K562 (cell line): ENCODE measurements at regions of chr16 and their contacts with region 1.

Region 1: DNA sequence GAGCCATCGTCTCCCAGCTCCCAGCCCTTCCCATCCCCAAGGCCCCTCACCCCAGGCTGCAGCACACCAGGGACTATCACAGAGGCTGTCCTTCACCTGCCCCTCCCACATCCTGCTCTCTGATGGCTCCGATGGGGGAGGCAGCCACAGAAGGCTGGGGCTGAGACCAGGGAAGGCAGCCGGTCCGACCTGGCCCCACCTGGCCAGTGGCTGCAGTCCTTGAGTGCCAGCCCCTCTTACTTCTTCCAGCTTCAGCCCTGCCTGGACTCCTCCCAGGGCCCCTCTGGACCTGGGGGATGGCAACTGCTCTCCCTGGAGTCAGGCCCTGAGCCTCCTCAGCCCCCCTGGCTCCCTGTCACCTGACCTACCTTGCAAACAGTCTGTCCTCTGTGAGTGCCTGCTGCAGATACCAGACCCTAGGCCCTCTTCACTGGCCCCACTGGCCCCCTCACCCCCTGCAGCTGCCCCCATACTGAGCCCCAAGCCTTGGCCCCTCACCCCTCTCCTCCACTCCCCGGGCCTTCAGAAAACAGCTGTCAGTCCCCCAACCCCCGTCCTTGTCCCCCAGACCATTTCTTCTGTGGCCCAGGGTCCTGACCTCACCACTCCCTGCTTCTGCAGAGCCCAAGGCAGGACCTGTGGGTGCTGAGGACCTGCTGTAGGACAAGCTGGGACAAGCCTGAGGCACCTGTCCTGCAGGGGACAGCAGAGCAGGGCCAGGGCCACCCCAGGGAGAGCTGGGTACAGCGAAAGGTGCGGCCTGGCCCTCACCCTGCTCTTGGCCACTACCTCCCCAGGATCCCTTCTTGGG is 12.6 kb upstream of the SRRM2 start:
- DNase-seq: no peak
- ATAC-seq: peak; percentile 11
- H3K4me3 ChIP-seq: no peak overlapping the region
- H3K27ac ChIP-seq: no peak overlapping the region
- H3K4me1 ChIP-seq: peaks cover 7 to 43% of the 10 kb centered on the region in 2 experiments; a peak in 4 of 5 replicates
- H3K27me3 ChIP-seq: no peaks in the 10 kb centered on the region
- CTCF ChIP-seq: no peak
- EP300 ChIP-seq: no peak
- POLR2A ChIP-seq: no peak
- RAD21 ChIP-seq: no peak

Region 2: GRCh38 chr16:2682209-2683021 is 57.4 kb before region 1 on chr16 and contains the start of gene KCTD5:
- CTCF ChIA-PET with region 1: no interaction called
- POLR2A ChIA-PET with region 1: no interaction called
- in situ Hi-C with region 1: no loop called
- intact Hi-C with region 1: no loop called
- DNase-seq: peak; percentile 92 to 98 (median 96)
- ATAC-seq: peak; percentile 95
- H3K4me3 ChIP-seq: peak within 1 kb of the TSS; percentile 98
- H3K27ac ChIP-seq: peak within 1 kb of the TSS; percentile 88
- H3K4me1 ChIP-seq: peaks cover 9 to 19% of the 10 kb centered on the region in 2 experiments
- H3K27me3 ChIP-seq: no peaks in the 10 kb centered on the region
- CTCF ChIP-seq: 0 out of 6 replicates have a peak, but pooled peaks of 1 of the 3 experiments have one; percentile 7
- EP300 ChIP-seq: peak; percentile 68
- POLR2A ChIP-seq: peak; percentile 96
- RAD21 ChIP-seq: no peak
- polyA plus RNA-seq, gene KCTD5: 0.73 to 1.6 TPM

Region 3: GRCh38 chr16:2752035-2752849 is 12.4 kb after region 1 on chr16 and contains the start of gene SRRM2:
- CTCF ChIA-PET with region 1: interaction called, 3 read pairs
- POLR2A ChIA-PET with region 1: interaction called, 51 read pairs
- in situ Hi-C with region 1: no loop called
- intact Hi-C with region 1: no loop called
- DNase-seq: peak; percentile 82 to 97 (median 88)
- ATAC-seq: peak; percentile 90
- H3K4me3 ChIP-seq: peak within 1 kb of the TSS; percentile 79
- H3K27ac ChIP-seq: peak within 1 kb of the TSS; percentile 100
- H3K4me1 ChIP-seq: peaks cover 21 to 25% of the 10 kb centered on the region in 2 experiments
- H3K27me3 ChIP-seq: no peaks in the 10 kb centered on the region
- CTCF ChIP-seq: peak in 1 of 3 experiments; percentile 4; a peak in 2 of 6 replicates
- EP300 ChIP-seq: no peak
- POLR2A ChIP-seq: peak; percentile 94
- RAD21 ChIP-seq: no peak
- polyA plus RNA-seq, gene SRRM2: 26.7 to 27.6 TPM

Region 4: DNA sequence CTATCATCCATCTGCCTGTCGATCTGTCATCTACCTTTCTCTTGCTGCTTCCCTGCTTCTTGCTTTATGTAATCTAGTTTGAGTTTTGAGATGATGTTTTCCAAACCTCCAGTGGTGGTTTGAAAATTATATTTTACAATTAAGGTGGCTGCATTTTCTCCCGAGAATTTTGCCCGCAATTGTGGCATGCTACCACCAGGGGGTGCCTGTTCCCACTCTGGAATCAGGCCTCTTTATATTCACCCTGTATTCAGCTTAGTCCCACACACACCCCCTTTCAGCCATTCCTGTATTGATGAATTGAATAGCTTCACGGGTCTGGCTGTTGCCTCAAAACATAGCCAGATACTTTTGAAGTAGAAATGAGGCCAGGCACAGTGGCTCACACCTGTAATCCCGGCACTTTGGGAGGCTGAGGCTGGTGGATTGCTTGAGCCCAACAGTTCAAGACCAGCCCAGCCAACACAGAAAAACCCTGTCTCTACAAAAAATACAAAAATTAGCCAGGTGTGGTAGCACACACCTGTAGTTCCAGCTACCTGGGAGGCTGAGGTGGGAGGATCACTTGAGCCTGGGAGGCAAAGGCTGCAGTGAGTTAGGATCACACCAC is 115.0 kb after region 1 on chr16:
- CTCF ChIA-PET with region 1: no interaction called
- POLR2A ChIA-PET with region 1: no interaction called
- in situ Hi-C with region 1: no loop called
- intact Hi-C with region 1: no loop called
- DNase-seq: peak in 3 of 4 experiments; percentile 30 to 61 (median 57)
- ATAC-seq: no peak
- H3K4me3 ChIP-seq: no peak overlapping the region
- H3K27ac ChIP-seq: no peak overlapping the region
- H3K4me1 ChIP-seq: peaks cover 7 to 62% of the 10 kb centered on the region in 2 experiments; a peak in 3 of 5 replicates
- H3K27me3 ChIP-seq: peaks cover 0 to 23% of the 10 kb centered on the region in 2 experiments; a peak in 1 of 5 replicates
- CTCF ChIP-seq: peak; percentile 54 to 75 (median 68)
- EP300 ChIP-seq: no peak
- POLR2A ChIP-seq: no peak
- RAD21 ChIP-seq: peak; percentile 31 to 48